Ascending aorta (tissue), 2 donors: ENCODE measurements at regions of chr5 and their contacts with region 1.

Region 1: GRCh38 chr5:103041071-103041676 is 78.8 kb downstream of the GIN1 start:
- DNase-seq: no peak
- H3K4me3 ChIP-seq: peak overlapping the region in 1 of 2 donors; percentile 20
- H3K27ac ChIP-seq: no peak overlapping the region
- H3K4me1 ChIP-seq: no peaks in the 10 kb centered on the region
- H3K27me3 ChIP-seq: no peaks in the 10 kb centered on the region
- CTCF ChIP-seq: peak; percentile 36 to 71 (median 68)

Region 2: DNA sequence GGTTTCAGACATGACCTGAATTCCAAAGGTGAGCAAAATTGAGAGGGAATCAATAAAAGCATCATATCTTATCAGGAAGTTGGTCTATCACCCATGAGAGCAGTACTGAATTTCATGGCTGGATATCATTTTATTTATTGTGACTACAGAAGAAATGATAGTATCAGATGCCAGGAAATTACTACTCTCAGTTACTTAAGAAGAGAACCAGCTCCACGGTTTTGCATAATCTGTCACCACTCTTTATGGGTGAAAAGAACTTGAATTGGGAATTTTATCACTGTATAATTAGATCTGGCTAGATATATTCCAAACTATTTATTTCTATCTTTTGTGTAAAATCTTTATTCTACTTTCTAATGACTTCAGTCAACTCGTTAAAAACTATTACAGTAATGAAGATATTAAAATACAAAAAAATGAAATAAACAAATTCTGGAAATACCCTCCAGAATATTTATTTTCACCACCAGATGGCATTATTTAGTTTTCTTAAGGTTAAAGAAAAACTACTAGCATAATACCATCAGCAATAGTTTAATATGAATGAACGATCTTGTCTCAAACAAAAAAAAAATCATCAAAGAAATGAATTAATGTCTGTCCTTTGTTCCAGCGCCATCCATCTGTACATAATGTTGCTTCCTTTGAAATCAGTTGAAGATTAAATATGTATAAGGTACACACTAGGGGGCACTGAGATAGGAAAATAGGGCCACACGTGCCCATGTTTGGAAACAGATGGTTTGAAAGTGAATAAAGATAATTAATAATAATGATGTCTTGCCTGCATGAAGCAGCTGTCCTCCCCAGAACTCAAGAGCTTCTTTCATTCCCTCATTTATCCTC is 457.7 kb before region 1 on chr5:
- intact Hi-C with region 1: loop called (anchors 1 kb)
- DNase-seq: no peak
- H3K4me3 ChIP-seq: no peak overlapping the region
- H3K27ac ChIP-seq: no peak overlapping the region
- H3K4me1 ChIP-seq: peaks cover 0 to 3% of the 10 kb centered on the region in 2 donors
- H3K27me3 ChIP-seq: no peaks in the 10 kb centered on the region
- CTCF ChIP-seq: peak; percentile 15 to 58 (median 42)

Region 3: DNA sequence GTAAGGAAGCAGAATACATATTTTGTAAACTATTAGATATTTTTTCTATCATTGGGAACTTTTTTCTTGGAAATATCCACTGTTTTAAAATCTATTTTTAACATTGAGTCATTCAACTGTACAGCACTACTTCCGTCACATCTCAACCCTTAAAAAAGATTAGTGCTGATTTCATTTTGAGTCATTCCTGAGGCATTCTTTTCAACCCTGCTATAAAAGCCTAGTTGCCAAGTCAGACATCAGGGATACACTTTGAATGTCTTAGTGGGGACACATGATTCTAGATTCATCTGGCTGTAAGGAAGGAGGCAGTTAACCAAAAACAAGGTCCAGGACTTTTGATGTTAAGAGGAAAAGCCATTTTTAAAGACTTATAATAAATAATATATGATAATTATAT is 82.1 kb before region 1 on chr5:
- intact Hi-C with region 1: no loop called
- DNase-seq: no peak
- H3K4me3 ChIP-seq: no peak overlapping the region
- H3K27ac ChIP-seq: peak overlapping the region; percentile 64 to 76
- H3K4me1 ChIP-seq: peaks cover 0 to 29% of the 10 kb centered on the region in 2 donors
- H3K27me3 ChIP-seq: no peaks in the 10 kb centered on the region
- CTCF ChIP-seq: no peak